Activated B cell treated with CpG ODN at 0.5 μM for 24 hours (primary cell): ENCODE measurements at regions of chr1 and their contacts with region 1.

Region 1: DNA sequence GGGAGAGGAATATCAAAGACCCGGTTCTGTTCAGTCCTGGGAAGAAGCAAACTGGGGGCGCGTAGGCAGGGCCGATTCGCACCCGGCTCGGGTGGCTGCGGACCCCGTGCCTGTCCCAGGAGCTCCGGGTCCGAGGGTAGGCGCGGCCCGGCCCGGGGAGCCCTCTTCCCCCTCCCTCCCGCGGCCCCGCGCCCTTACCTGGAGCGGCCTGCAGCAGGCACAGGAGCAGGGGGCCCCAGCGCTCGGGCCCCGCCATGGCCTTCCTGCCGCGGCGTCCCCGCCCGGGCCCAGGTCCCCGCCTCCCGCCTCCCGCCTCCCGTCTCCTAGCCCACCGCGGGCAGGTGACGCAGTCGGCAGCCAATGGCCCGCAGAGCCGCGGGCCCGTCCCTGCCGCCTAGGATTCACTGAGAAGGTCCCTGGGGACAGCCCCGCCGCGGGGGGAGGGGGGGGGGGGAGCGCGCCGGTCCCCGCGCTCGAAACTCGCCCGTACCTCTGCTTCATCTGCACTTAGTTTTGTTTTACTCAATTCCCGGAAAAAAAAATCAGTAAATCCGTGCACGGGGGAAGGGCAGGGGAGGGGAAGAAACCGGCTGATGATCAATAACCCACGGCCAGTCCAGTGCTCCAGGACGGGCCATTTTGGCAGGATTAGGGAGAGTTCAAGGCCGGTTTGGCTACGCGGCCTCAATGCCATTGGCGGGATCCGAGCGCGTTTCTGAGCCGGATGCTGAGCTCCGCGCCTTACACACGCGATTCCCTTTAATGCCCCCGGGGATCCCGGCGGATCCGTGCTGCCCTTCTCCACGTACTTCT is at the start of gene IFNLR1:
- DNase-seq: peak; percentile 73
- ATAC-seq: peak; percentile 56
- H3K4me3 Mint-ChIP-seq: peak within 1 kb of the TSS; percentile 92
- H3K27ac Mint-ChIP-seq: peak within 1 kb of the TSS; percentile 98
- H3K4me1 Mint-ChIP-seq: peaks cover 82% of the 10 kb centered on the region
- H3K27me3 Mint-ChIP-seq: no peaks in the 10 kb centered on the region
- CTCF ChIP-seq: no peak
- total RNA-seq, gene IFNLR1: 38.6 and 39.2 TPM in 2 replicates

Region 2: DNA sequence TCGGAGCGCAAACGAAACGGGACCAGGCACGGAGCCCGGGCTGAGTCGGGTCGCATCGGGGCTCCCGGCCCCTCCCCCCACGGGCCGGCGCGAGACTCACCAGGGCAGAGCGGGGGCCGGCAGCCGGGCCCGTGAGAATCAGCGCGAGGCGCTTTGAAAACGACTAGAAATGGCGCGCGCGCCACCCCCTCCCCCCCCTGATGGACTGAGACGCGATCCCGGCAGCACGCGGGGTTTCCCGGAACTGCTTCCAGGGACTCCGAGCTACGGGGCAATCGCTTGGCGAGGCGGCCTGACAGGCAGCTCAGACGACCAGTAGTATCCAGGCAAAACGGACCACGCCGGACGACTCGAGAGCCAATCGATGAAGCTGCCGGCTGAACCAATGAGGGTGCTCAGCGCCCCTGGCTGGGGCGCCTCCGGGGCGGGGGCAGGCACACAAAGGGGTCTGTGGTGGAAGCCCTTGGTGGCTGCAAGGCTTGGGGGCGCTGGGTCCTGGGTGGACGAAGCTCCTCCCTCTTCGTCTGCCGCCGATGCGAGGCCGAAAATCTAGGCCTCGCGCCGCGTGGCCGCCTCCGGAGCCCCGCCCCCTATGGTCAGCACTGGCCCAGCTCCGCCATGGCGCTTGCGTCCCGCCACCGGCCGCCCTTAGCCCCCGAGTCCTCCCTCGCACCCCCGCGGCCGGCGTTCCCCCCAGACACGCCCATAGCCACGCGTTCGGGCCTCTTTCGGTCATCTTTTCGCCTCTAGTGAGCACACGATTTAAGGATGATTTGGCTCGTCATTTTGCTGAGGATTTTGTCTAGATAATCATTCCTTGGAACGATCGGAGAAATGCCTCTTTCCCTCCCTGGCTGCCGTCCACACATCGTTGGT is 842.9 kb before region 1 on chr1 and contains the start of gene HNRNPR:
- CTCF ChIA-PET with region 1: no interaction called
- POLR2A ChIA-PET with region 1: interaction called, 15 read pairs
- intact Hi-C with region 1: no loop called
- DNase-seq: peak; percentile 89
- ATAC-seq: peak; percentile 96
- H3K4me3 Mint-ChIP-seq: peak within 1 kb of the TSS; percentile 92
- H3K27ac Mint-ChIP-seq: peak within 1 kb of the TSS; percentile 92
- H3K4me1 Mint-ChIP-seq: peaks cover 48% of the 10 kb centered on the region
- H3K27me3 Mint-ChIP-seq: no peaks in the 10 kb centered on the region
- CTCF ChIP-seq: no peak
- total RNA-seq, gene HNRNPR: 171 and 172 TPM in 2 replicates

Region 3: DNA sequence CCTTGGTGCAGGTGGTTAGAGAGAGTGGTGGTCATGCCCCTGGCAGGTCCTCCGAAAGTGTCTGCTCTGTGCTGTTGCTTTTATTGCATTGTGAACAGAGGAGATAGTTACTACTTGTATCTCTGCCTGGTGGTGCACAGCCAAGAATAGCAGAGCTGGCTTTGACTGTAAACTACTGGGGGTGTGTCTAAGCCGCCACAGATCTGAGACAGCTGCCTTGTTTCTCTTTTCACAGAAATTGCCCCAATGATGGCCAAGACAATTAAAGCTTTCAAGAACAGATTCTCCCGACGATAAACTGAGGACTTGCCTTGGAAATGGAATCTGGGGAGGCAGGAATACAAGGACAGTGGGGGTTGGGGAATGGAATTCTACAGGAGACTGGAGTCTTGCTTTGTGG is 427.9 kb before region 1 on chr1:
- CTCF ChIA-PET with region 1: no interaction called
- POLR2A ChIA-PET with region 1: no interaction called
- intact Hi-C with region 1: no loop called
- DNase-seq: no peak
- ATAC-seq: no peak
- H3K4me3 Mint-ChIP-seq: no peak overlapping the region
- H3K27ac Mint-ChIP-seq: no peak overlapping the region
- H3K4me1 Mint-ChIP-seq: peaks cover 6% of the 10 kb centered on the region
- H3K27me3 Mint-ChIP-seq: no peaks in the 10 kb centered on the region
- CTCF ChIP-seq: no peak

Region 4: GRCh38 chr1:24201941-24202440 is 14.8 kb after region 1 on chr1:
- CTCF ChIA-PET with region 1: interaction called, 46 read pairs
- POLR2A ChIA-PET with region 1: interaction called, 40 read pairs
- intact Hi-C with region 1: loop called (anchors 1 kb)
- DNase-seq: no peak
- ATAC-seq: peak; percentile 48
- H3K4me3 Mint-ChIP-seq: no peak overlapping the region
- H3K27ac Mint-ChIP-seq: no peak overlapping the region
- H3K4me1 Mint-ChIP-seq: peaks cover 35% of the 10 kb centered on the region
- H3K27me3 Mint-ChIP-seq: no peaks in the 10 kb centered on the region
- CTCF ChIP-seq: no peak

Region 5: GRCh38 chr1:24361811-24362210 is 174.6 kb after region 1 on chr1:
- CTCF ChIA-PET with region 1: no interaction called
- POLR2A ChIA-PET with region 1: no interaction called
- intact Hi-C with region 1: no loop called
- DNase-seq: no peak
- ATAC-seq: no peak
- H3K4me3 Mint-ChIP-seq: no peak overlapping the region
- H3K27ac Mint-ChIP-seq: no peak overlapping the region
- H3K4me1 Mint-ChIP-seq: peaks cover 5% of the 10 kb centered on the region
- H3K27me3 Mint-ChIP-seq: no peaks in the 10 kb centered on the region
- CTCF ChIP-seq: no peak

Region 6: DNA sequence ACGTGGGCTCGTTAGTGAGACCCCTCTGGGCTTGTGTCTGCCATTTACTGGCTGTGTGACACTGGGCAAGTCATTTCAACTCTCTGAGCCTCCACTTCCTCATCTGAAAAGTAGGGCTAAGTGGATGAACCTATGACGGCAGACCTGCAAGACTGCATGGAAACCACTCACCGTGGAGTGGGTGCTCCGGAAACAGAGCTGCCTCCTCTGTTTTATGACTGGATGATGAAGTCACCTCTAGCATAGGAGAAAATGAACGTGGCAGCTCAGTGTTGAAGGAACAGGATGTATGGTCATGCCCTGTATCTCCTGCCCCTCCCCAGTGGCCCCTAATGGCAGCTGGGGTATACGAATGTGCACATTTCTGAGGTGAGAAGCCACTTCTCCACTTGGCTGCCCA is 185.8 kb after region 1 on chr1:
- CTCF ChIA-PET with region 1: no interaction called
- POLR2A ChIA-PET with region 1: interaction called, 14 read pairs
- intact Hi-C with region 1: no loop called
- DNase-seq: peak; percentile 25
- ATAC-seq: peak; percentile 92
- H3K4me3 Mint-ChIP-seq: peak overlapping the region; percentile 21
- H3K27ac Mint-ChIP-seq: peak overlapping the region; percentile 87
- H3K4me1 Mint-ChIP-seq: peaks cover 20% of the 10 kb centered on the region
- H3K27me3 Mint-ChIP-seq: no peaks in the 10 kb centered on the region
- CTCF ChIP-seq: no peak

Region 7: GRCh38 chr1:24502709-24503058 is 315.5 kb after region 1 on chr1 and contains the start of gene RCAN3:
- CTCF ChIA-PET with region 1: no interaction called
- POLR2A ChIA-PET with region 1: interaction called, 12 read pairs
- intact Hi-C with region 1: loop called (anchors 2 kb)
- DNase-seq: peak; percentile 89
- ATAC-seq: peak; percentile 86
- H3K4me3 Mint-ChIP-seq: peak within 1 kb of the TSS; percentile 91
- H3K27ac Mint-ChIP-seq: peak within 1 kb of the TSS; percentile 97
- H3K4me1 Mint-ChIP-seq: peaks cover 52% of the 10 kb centered on the region
- H3K27me3 Mint-ChIP-seq: no peaks in the 10 kb centered on the region
- CTCF ChIP-seq: no peak
- total RNA-seq, gene RCAN3: 22.8 and 23.6 TPM in 2 replicates

Region 8: DNA sequence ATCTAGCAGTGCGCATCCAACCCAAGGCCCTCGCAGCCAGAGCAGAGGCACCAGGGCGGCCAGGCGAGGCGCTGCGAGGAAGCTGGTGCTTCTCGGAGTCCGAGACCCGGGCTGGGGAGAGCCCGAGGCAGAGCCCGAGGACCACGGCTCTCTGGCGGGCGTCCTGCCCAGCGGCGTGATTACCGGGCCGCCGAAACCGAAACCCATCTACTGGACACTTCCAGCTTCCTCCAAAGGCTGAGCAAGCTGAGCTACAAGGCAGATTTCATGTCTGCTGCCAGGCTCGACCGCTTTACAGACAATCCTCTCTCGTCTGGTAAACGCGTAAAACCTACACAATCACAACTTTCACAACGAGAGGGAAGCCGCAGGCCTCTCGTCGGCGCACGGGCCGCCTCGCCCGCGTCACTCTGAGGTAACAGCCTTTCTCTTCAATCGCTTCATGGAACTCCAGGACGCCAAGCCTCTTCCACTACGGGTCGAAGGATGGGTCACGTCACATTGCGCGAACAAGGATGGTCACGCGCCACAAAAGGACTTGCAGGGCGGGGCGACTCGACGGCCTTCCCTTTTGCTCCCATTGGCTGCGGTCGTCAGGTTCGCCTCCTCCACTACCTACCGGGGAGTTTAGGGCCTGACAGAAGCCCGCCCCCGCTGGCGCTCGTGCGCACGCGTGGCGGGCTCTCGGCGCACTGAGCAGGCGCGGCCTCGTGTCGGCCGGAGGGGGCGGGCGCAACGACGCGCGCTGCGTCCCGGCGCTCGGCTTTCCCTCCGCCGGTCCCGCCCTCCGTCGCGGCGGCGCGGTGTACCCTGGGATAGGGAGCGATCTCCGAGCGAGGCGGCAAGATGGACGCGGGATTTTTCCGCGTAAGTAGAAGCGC is 455.5 kb after region 1 on chr1 and contains the start of gene SRRM1:
- CTCF ChIA-PET with region 1: interaction called, 3 read pairs
- POLR2A ChIA-PET with region 1: interaction called, 16 read pairs
- intact Hi-C with region 1: loop called (anchors 2 kb)
- DNase-seq: peak; percentile 96
- ATAC-seq: peak; percentile 90
- H3K4me3 Mint-ChIP-seq: peak within 1 kb of the TSS; percentile 96
- H3K27ac Mint-ChIP-seq: peak within 1 kb of the TSS; percentile 99
- H3K4me1 Mint-ChIP-seq: peaks cover 38% of the 10 kb centered on the region
- H3K27me3 Mint-ChIP-seq: no peaks in the 10 kb centered on the region
- CTCF ChIP-seq: no peak
- total RNA-seq, gene SRRM1: 214 and 220 TPM in 2 replicates

Region 9: GRCh38 chr1:25031966-25032667 is 844.9 kb after region 1 on chr1:
- CTCF ChIA-PET with region 1: no interaction called
- POLR2A ChIA-PET with region 1: no interaction called
- intact Hi-C with region 1: loop called (anchors 2 kb)
- DNase-seq: peak; percentile 61
- ATAC-seq: peak; percentile 50
- H3K4me3 Mint-ChIP-seq: peak overlapping the region; percentile 80
- H3K27ac Mint-ChIP-seq: peak overlapping the region; percentile 97
- H3K4me1 Mint-ChIP-seq: peaks cover 3% of the 10 kb centered on the region
- H3K27me3 Mint-ChIP-seq: no peaks in the 10 kb centered on the region
- CTCF ChIP-seq: no peak